Naive thymus-derived CD4-positive, alpha-beta T cell (primary cell): ENCODE measurements at regions of chr16 and their contacts with region 1.

Region 1: DNA sequence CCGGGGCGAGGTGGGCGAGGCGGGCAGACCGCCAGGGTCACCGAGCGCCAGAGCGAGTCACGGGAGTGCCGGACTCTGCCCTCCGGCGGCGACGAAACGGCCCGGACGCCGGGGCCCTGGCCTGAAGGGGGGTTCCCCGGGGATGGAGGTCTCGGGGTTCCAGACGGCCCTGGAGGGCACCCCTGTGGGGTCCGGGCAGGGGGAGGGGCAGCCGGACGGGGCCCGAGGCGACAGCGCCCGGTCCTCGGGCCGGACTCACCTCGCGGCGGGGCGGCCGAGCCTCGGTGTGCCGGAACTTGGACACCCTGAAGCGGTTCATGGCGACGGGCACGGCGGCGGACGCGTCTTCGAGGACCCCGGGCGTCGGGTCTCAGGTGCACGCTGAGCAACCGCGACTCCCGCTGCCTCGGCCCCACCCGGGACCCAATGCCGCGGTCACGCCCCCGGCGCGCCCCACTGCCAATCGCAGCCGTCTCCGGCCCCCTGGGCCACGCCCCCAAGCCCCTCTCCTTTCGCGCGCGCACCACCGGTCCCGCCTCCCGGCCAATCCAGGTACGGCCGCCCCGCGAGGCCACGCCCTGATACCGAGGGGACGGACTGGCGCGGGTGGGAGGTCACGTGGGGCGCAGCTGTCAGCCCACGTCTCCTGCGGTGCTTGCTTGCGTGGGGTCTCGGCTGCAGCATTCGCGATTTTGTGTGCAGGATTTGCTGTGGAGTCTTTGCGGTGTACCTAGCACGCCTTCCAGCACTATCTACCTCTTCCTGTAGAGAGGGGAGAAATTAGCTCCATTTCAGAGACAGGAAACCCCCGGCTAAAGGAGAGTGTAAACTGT is at the start of gene CORO7:
- DNase-seq: peak; percentile 98 to 100 (median 99)
- ATAC-seq: peak; percentile 89
- H3K4me3 ChIP-seq: peak within 1 kb of the TSS; percentile 71
- H3K4me3 Mint-ChIP-seq: peak within 1 kb of the TSS; percentile 88 to 98 (median 95)
- H3K27ac ChIP-seq: peak within 1 kb of the TSS; percentile 98
- H3K27ac Mint-ChIP-seq: peak within 1 kb of the TSS; percentile 91 to 99 (median 98)
- H3K4me1 ChIP-seq: peaks cover 26 to 33% of the 10 kb centered on the region in 2 donors
- H3K4me1 Mint-ChIP-seq: peaks cover 18 to 43% (median 38%) of the 10 kb centered on the region in 7 donors
- H3K27me3 ChIP-seq: no peaks in the 10 kb centered on the region
- H3K27me3 Mint-ChIP-seq: peaks cover 0 to 9% (median 0%) of the 10 kb centered on the region in 5 donors
- total RNA-seq, gene CORO7: 114 to 572 (median 165) TPM

Region 2: DNA sequence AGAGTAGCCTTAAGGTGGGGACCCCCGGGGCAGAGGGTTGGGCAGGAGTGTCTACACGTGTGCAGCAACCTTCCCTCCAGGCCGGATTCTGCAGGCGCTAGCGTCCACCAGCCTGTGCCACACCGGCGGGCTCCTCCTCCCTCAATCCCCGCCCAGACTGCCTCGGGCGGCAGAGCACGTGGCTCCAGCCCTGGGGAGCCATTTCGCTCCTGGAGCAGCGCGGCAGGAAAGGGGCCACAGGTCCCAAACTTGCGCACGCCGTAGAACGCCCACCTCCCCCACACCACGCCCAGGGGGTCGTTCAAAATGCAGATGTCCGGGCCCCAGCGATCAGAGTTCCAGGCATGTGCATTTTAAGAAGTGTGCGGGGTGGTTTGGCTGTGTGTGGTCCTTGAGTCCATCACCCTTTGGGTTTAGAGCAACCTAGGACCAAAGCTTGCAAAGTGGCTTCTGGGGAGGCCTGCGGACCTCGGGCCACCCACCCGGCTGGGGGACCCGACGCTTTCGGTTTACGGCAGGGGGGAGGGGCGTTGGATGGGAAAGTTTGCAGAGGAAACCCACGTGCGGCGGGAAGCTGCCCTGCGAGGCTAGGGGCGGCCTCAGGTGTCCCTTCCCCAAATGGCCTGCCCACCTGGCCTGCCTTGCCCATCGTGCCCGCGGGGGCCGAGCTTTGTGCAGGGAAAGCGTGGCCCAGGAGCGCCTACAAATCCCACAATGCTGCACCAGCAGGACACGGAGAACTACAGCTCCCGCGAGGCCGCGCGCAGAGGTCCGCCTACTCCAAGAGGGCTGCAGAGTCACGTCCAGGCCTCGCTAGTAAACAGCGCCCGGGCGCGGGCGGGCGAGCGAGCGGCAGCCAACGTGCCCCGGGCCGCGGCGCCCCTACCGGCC is 145.0 kb before region 1 on chr16:
- CTCF ChIA-PET with region 1: no interaction called
- POLR2A ChIA-PET with region 1: interaction called, 7 read pairs
- intact Hi-C with region 1: loop called in 1 of 2 experiments (anchors 1 kb)
- DNase-seq: peak; percentile 68 to 90 (median 84)
- ATAC-seq: peak; percentile 89
- H3K4me3 ChIP-seq: peak overlapping the region; percentile 99
- H3K4me3 Mint-ChIP-seq: peak overlapping the region; percentile 85 to 97 (median 92)
- H3K27ac ChIP-seq: peak overlapping the region; percentile 58
- H3K27ac Mint-ChIP-seq: peak overlapping the region; percentile 67 to 98 (median 83)
- H3K4me1 ChIP-seq: peaks cover 5 to 13% of the 10 kb centered on the region in 2 donors
- H3K4me1 Mint-ChIP-seq: peaks cover 8 to 23% (median 15%) of the 10 kb centered on the region in 7 donors
- H3K27me3 ChIP-seq: no peaks in the 10 kb centered on the region
- H3K27me3 Mint-ChIP-seq: no peaks in the 10 kb centered on the region

Region 3: DNA sequence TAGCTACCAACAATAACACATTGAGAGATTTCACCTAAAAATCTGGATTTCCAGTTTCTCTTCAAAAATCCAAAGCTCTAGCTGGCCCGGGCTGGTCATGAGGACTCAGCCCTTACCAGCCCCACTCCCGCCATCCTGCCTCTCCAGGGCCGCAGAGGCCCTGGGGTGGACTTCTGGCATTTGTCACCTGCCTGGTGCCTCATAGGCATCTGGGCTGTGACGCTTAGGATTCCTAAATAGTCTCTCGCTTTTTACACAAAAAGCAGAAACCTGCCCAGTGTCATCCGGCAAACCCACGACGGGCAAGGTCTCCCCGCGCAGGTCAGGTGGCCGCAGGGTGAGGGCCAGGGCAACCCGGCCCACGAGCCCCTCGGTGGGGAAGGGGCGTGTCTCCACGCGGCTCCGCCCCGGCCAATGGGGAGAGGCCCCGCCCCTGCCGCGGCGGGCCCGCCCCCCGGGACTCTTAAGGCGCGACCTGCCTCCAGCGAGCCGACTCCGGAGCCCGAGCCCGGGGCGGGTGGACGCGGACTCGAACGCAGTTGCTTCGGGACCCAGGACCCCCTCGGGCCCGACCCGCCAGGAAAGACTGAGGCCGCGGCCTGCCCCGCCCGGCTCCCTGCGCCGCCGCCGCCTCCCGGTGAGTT is 44.9 kb before region 1 on chr16 and contains the start of gene VASN:
- CTCF ChIA-PET with region 1: interaction called, 3 read pairs
- POLR2A ChIA-PET with region 1: interaction called, 3 read pairs
- intact Hi-C with region 1: loop called (anchors 1 to 5 kb)
- DNase-seq: peak; percentile 68 to 84 (median 78)
- ATAC-seq: peak; percentile 89
- H3K4me3 ChIP-seq: peak within 1 kb of the TSS; percentile 51
- H3K4me3 Mint-ChIP-seq: peak within 1 kb of the TSS; percentile 61 to 88 (median 81)
- H3K27ac ChIP-seq: peak within 1 kb of the TSS; percentile 58
- H3K27ac Mint-ChIP-seq: peak within 1 kb of the TSS in 6 of 9 donors; percentile 43 to 74 (median 66)
- H3K4me1 ChIP-seq: peaks cover 15 to 19% of the 10 kb centered on the region in 2 donors
- H3K4me1 Mint-ChIP-seq: peaks cover 0 to 24% (median 12%) of the 10 kb centered on the region in 7 donors
- H3K27me3 ChIP-seq: no peaks in the 10 kb centered on the region
- H3K27me3 Mint-ChIP-seq: no peaks in the 10 kb centered on the region
- total RNA-seq, gene VASN: 0.24 to 1.3 (median 0.45) TPM in 4 of 5 experiments, not detected in the other

Region 4: DNA sequence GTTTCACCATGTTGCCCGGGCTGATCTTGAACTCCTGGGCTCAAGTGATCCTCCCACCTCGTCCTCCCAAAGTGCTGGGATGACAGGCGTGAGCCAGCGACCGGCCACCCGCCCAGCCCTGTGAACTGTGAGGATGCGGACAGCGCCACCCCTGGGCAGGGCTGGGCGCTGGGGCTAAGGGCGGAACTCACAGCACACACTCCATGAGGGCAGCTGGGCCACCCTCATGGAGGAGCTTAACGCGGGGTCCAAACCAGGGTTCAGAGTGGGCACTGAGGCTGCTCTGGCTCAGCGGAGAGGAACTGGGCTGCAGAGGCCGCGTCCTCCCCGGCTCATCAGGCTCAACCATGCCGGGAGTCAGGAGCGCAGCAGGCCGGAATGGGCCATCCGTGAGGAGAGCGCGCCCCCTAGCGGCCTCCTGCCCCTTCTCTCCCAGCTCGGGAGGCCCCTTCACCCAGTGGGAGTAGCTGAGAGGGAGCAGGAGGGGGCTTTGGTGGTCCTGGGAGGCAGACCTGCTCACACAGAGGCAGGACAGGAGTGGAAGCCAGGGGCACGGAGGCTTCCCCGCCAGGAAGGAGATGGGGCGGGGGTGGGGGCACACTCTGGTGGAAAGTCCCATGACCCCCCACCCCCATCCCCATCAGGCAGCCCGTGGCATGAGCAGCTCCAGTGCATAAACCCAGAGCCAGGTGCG is 13.8 kb before region 1 on chr16:
- CTCF ChIA-PET with region 1: interaction called, 7 read pairs
- POLR2A ChIA-PET with region 1: interaction called, 19 read pairs
- intact Hi-C with region 1: loop called in 1 of 2 experiments (anchors 1 kb)
- DNase-seq: peak in 8 of 9 donors; percentile 33 to 76 (median 64)
- ATAC-seq: peak; percentile 61
- H3K4me3 ChIP-seq: no peak overlapping the region
- H3K4me3 Mint-ChIP-seq: peak overlapping the region in 1 of 10 donors; percentile 13
- H3K27ac ChIP-seq: no peak overlapping the region
- H3K27ac Mint-ChIP-seq: peak overlapping the region in 4 of 9 donors; percentile 14 to 66 (median 28)
- H3K4me1 ChIP-seq: no peaks in the 10 kb centered on the region
- H3K4me1 Mint-ChIP-seq: peaks cover 9 to 29% (median 19%) of the 10 kb centered on the region in 7 donors
- H3K27me3 ChIP-seq: no peaks in the 10 kb centered on the region
- H3K27me3 Mint-ChIP-seq: no peaks in the 10 kb centered on the region

Region 5: DNA sequence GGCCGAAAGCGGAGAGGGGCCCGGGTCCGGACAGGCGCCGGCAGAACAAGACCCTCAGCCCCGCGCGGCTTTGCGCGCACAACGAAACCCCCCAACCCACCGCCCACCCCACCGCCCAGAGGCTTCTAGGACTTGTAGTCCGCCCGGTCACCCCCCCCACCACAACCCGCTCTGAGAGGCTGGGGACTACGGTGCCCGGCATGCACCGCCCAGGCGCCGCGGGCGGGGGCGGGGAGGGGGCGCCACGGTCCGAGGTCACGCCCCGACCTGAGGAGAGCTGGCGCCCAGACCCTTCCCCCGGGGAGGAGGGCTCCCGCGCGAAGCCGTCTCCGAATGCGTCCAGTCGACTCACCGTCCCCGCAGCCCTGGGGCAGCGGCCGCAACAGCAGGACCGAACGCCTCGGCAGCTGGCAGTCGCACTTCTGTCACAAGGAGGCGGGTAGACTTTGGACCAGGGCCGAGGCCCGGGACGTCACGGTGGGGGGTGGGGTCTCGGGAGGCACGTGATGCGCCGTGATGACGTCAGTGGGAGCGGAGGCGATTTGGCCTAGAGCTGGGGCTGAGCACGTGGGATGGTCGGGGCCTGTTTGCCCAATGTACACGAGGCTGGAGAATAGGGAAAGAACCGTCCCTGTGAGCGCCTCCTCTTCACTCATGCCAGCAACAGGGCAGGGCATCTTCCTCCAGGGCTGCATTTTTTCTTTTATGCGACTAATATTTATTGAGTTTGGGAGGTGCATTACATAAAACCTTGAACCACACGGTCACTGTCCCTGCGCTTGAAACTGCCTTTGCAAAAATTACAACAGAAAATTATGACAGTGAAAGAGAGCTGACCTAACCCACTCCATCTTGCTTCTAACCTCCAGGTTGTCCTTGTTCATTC is 122.2 kb after region 1 on chr16 and contains the start of gene CDIP1:
- CTCF ChIA-PET with region 1: interaction called, 4 read pairs
- POLR2A ChIA-PET with region 1: interaction called, 6 read pairs
- intact Hi-C with region 1: loop called (anchors 1 to 5 kb)
- DNase-seq: peak; percentile 85 to 93 (median 90)
- ATAC-seq: peak; percentile 92
- H3K4me3 ChIP-seq: peak within 1 kb of the TSS; percentile 81
- H3K4me3 Mint-ChIP-seq: peak within 1 kb of the TSS; percentile 66 to 91 (median 82)
- H3K27ac ChIP-seq: peak within 1 kb of the TSS; percentile 96
- H3K27ac Mint-ChIP-seq: peak within 1 kb of the TSS; percentile 78 to 97 (median 92)
- H3K4me1 ChIP-seq: peaks cover 10 to 33% of the 10 kb centered on the region in 2 donors
- H3K4me1 Mint-ChIP-seq: peaks cover 24 to 44% (median 40%) of the 10 kb centered on the region in 7 donors
- H3K27me3 ChIP-seq: no peaks in the 10 kb centered on the region
- H3K27me3 Mint-ChIP-seq: peaks cover 0 to 9% (median 0%) of the 10 kb centered on the region in 5 donors
- total RNA-seq, gene CDIP1: 28.1 to 41.1 (median 31.0) TPM

Region 6: GRCh38 chr16:4766874-4767628 is 350.6 kb after region 1 on chr16 and contains the start of gene ZNF500:
- CTCF ChIA-PET with region 1: no interaction called
- POLR2A ChIA-PET with region 1: interaction called, 3 read pairs
- intact Hi-C with region 1: loop called in 1 of 2 experiments (anchors 10 kb)
- DNase-seq: peak; percentile 90 to 98 (median 92)
- ATAC-seq: peak; percentile 99
- H3K4me3 ChIP-seq: peak within 1 kb of the TSS; percentile 82
- H3K4me3 Mint-ChIP-seq: peak within 1 kb of the TSS; percentile 90 to 94 (median 92)
- H3K27ac ChIP-seq: peak within 1 kb of the TSS; percentile 84
- H3K27ac Mint-ChIP-seq: peak within 1 kb of the TSS; percentile 86 to 96 (median 92)
- H3K4me1 ChIP-seq: peaks cover 17 to 19% of the 10 kb centered on the region in 2 donors
- H3K4me1 Mint-ChIP-seq: peaks cover 24 to 49% (median 34%) of the 10 kb centered on the region in 7 donors
- H3K27me3 ChIP-seq: no peaks in the 10 kb centered on the region
- H3K27me3 Mint-ChIP-seq: no peaks in the 10 kb centered on the region
- total RNA-seq, gene ZNF500: 13.8 to 43.0 (median 24.7) TPM

Region 7: GRCh38 chr16:4802659-4803287 is 386.4 kb after region 1 on chr16:
- CTCF ChIA-PET with region 1: no interaction called
- POLR2A ChIA-PET with region 1: interaction called, 3 read pairs
- intact Hi-C with region 1: loop called in 1 of 2 experiments (anchors 2 kb)
- DNase-seq: peak; percentile 82 to 97 (median 93)
- ATAC-seq: peak; percentile 93
- H3K4me3 ChIP-seq: peak overlapping the region; percentile 79
- H3K4me3 Mint-ChIP-seq: peak overlapping the region; percentile 81 to 86 (median 86)
- H3K27ac ChIP-seq: peak overlapping the region; percentile 60
- H3K27ac Mint-ChIP-seq: peak overlapping the region in 8 of 9 donors; percentile 36 to 84 (median 74)
- H3K4me1 ChIP-seq: peaks cover 10 to 18% of the 10 kb centered on the region in 2 donors
- H3K4me1 Mint-ChIP-seq: peaks cover 7 to 19% (median 12%) of the 10 kb centered on the region in 7 donors
- H3K27me3 ChIP-seq: no peaks in the 10 kb centered on the region
- H3K27me3 Mint-ChIP-seq: no peaks in the 10 kb centered on the region